WTC11 (cell line): ENCODE measurements at regions of chr18 and their contacts with region 1.

Region 1: DNA sequence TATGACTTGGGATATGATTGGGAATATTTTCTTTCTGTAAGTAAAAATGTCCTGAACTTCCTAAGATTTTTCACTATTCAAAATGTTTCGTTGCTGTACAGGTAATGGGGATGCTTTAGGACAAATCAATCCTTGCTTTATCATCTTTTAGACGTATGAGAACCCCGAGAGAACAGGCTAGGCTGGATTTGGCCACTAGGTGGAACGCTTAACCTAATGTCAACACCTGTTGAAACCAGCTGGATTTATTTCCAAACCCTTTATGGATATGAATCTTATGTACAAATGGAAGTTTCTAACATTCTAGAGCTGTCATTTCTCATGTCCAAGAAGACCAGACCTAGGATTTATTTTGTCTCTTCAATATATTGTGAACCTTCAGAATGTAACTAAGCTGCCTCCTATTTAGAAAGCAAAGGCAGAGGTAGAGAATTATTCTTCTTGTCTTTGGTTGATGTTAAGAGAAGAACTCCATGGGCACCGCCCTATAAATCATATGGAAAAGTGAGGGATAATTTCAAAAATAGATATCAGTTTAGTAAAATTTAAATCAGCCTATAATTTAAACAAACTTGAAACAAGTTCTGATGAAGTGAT is 96.7 kb downstream of the PMAIP1 start:
- DNase-seq: peak; percentile 49
- ATAC-seq: peak; percentile 60
- H3K4me3 Mint-ChIP-seq: no peak overlapping the region
- H3K27ac Mint-ChIP-seq: no peak overlapping the region
- H3K4me1 Mint-ChIP-seq: no peaks in the 10 kb centered on the region
- H3K27me3 Mint-ChIP-seq: no peaks in the 10 kb centered on the region
- CTCF ChIP-seq: peak; percentile 59; the same call in 1 of the 2 replicates

Region 2: DNA sequence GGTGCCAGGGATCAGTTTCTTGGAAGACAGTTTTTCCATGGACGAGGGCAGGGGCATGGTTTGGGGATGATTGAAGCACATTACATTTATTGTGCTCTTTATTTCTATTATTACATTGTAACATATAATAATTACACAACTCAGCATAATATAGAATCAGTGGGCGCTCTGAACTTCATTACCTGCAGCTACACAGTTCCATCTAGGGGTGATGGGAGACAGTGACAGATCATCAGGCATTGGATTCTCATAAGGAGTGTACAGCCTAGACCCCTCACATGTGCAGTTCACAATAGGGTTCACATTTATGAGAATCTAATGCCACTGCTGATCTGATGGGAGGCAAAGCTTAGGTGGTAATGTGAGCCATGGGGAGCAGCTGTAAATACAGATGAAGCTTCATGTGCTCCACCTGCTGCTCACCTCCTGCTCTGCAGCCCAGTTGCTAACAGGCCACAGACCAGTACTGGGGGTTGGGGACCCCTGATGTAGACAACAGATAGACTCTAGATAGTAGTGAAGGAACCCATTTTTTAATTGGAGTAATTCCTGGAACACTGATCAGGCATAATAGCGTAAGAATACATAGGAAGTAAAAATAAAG is 417.6 kb after region 1 on chr18:
- CTCF ChIA-PET with region 1: interaction called, 17 read pairs
- POLR2A ChIA-PET with region 1: no interaction called
- DNase-seq: peak; percentile 68
- ATAC-seq: peak; percentile 97
- H3K4me3 Mint-ChIP-seq: no peak overlapping the region
- H3K27ac Mint-ChIP-seq: no peak overlapping the region
- H3K4me1 Mint-ChIP-seq: no peaks in the 10 kb centered on the region
- H3K27me3 Mint-ChIP-seq: no peaks in the 10 kb centered on the region
- CTCF ChIP-seq: peak; percentile 49; the same call in 1 of the 2 replicates

Region 3: DNA sequence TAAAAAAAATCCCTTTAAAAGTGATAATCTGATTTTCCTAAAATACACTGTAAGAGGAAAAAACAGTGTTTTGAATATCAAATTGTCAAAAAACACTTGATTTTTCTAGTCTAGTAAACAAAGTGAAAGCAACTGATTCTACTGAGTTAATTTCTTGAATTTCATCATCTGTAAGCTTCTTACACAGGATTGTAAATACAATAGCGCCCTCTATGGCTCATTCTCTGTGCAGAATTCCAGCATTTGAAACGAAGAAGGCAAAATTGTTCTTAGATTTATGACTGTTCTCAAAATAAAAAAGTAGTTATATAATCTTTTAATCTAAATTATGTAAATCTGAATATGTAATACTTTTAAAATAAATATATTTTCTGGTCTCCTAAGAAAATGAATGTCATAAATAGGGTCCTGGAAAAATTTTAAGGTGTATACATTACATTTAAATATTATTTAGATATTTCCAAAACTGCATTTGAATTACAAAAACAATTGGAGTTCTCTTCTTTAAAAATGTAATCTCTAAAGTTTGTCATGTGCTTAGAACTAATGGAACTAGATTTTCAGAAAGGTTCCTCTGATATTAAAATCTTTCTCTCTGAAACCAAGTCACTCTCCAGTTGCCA is 553.0 kb after region 1 on chr18:
- CTCF ChIA-PET with region 1: interaction called, 31 read pairs
- POLR2A ChIA-PET with region 1: no interaction called
- DNase-seq: no peak
- ATAC-seq: no peak
- H3K4me3 Mint-ChIP-seq: no peak overlapping the region
- H3K27ac Mint-ChIP-seq: no peak overlapping the region
- H3K4me1 Mint-ChIP-seq: peaks cover 6% of the 10 kb centered on the region
- H3K27me3 Mint-ChIP-seq: no peaks in the 10 kb centered on the region
- CTCF ChIP-seq: peak; percentile 56